Activated T-helper 1 cell treated with anti-CD3 and anti-CD28 coated beads, Interleukin-12 subunit alpha, Interleukin-12 subunit beta, Interleukin-2, Interleukin-4 antibody, amounts not matched to agents 30 ng/mL and 10 ng/mL and 1 ng/mL, durations not matched to agents 14 hours and 24 hours and 36 hours (primary cell): ENCODE measurements at regions of chr1 and their contacts with region 1.

Region 1: DNA sequence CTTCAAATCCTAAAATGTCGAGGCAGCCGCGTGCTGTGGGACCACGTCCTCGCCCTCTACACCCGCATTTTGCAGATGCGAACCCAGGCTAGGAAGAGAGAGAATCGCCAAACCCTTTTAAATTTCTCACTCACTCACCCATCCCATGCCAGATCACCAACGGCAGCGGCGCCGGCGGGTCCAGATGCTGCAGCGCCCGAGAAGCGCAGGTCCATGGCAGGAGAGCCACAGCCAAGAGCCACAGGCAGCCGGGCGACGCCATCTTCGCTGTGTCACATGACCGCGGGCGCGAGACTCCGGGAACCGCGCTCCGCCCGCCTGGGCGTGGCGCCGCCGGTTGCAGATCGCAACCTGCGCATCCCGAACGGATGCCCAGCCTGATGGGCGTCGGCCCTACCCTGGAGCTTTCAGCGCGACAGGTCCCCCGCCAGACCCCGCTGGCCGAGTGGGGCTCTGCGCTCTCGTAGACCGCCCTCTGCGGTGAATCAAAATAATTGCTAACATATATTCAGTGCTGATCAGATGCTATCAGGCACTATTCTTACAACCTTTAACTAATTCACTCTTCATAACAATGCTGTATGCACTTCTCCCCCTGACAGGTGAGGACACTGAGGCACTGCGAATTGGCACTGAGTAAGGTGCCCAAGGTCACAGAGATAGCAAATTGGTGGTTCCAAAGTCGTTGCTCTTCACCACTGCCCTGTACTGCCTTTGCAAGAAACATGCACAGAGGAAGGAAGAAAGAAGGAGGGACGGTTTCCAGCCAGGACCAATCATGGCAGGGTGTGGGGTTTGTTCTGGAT is at the start of gene PPT1:
- DNase-seq: peak; percentile 79
- H3K4me3 Mint-ChIP-seq: peak within 1 kb of the TSS; percentile 97
- H3K27ac Mint-ChIP-seq: peak within 1 kb of the TSS; percentile 96
- H3K4me1 Mint-ChIP-seq: peaks cover 42% of the 10 kb centered on the region
- H3K27me3 Mint-ChIP-seq: peaks cover 10% of the 10 kb centered on the region
- total RNA-seq, gene PPT1: 101 and 110 TPM in 2 replicates

Region 2: GRCh38 chr1:40078512-40079333 is 18.5 kb before region 1 on chr1:
- intact Hi-C with region 1: loop called (anchors 2 kb)
- DNase-seq: peak; percentile 40
- H3K4me3 Mint-ChIP-seq: no peak overlapping the region
- H3K27ac Mint-ChIP-seq: peak overlapping the region; percentile 75
- H3K4me1 Mint-ChIP-seq: peaks cover 9% of the 10 kb centered on the region
- H3K27me3 Mint-ChIP-seq: no peaks in the 10 kb centered on the region

Region 3: GRCh38 chr1:40241362-40241761 is 144.2 kb after region 1 on chr1:
- intact Hi-C with region 1: loop called (anchors 5 kb)
- DNase-seq: no peak
- H3K4me3 Mint-ChIP-seq: peak overlapping the region; percentile 23
- H3K27ac Mint-ChIP-seq: peak overlapping the region; percentile 94
- H3K4me1 Mint-ChIP-seq: peaks cover 77% of the 10 kb centered on the region
- H3K27me3 Mint-ChIP-seq: no peaks in the 10 kb centered on the region

Region 4: GRCh38 chr1:40344597-40344996 is 247.4 kb after region 1 on chr1:
- intact Hi-C with region 1: loop called (anchors 5 kb)
- DNase-seq: no peak
- H3K4me3 Mint-ChIP-seq: peak overlapping the region; percentile 79
- H3K27ac Mint-ChIP-seq: peak overlapping the region; percentile 77
- H3K4me1 Mint-ChIP-seq: peaks cover 58% of the 10 kb centered on the region
- H3K27me3 Mint-ChIP-seq: no peaks in the 10 kb centered on the region

Region 5: GRCh38 chr1:40373338-40374283 is 276.4 kb after region 1 on chr1 and contains the start of gene SMAP2:
- intact Hi-C with region 1: no loop called
- DNase-seq: peak; percentile 95
- H3K4me3 Mint-ChIP-seq: peak within 1 kb of the TSS; percentile 97
- H3K27ac Mint-ChIP-seq: peak within 1 kb of the TSS; percentile 99
- H3K4me1 Mint-ChIP-seq: peaks cover 59% of the 10 kb centered on the region
- H3K27me3 Mint-ChIP-seq: peaks cover 3% of the 10 kb centered on the region
- total RNA-seq, gene SMAP2: 196 and 201 TPM in 2 replicates